Right cardiac atrium (tissue), 5 donors: ENCODE measurements at regions of chr4 and their contacts with region 1.

Region 1: GRCh38 chr4:74376888-74377483 is 12.0 kb downstream of the EREG start:
- DNase-seq: no peak
- ATAC-seq: peak; percentile 63 to 64
- H3K4me3 ChIP-seq: no peak overlapping the region
- H3K27ac ChIP-seq: no peak overlapping the region
- H3K4me1 ChIP-seq: no peaks in the 10 kb centered on the region
- H3K27me3 ChIP-seq: no peaks in the 10 kb centered on the region

Region 2: GRCh38 chr4:74444891-74445642 is 68.1 kb after region 1 on chr4 and contains the start of gene AREG:
- intact Hi-C with region 1: loop called in 1 of 4 experiments (anchors 5 kb)
- DNase-seq: peak; percentile 77 to 92 (median 86)
- ATAC-seq: peak; percentile 94 to 96
- H3K4me3 ChIP-seq: peak within 1 kb of the TSS; percentile 46
- H3K27ac ChIP-seq: peak within 1 kb of the TSS; percentile 61
- H3K4me1 ChIP-seq: no peaks in the 10 kb centered on the region
- H3K27me3 ChIP-seq: no peaks in the 10 kb centered on the region
- total RNA-seq, gene AREG: 2.7 to 7.3 (median 3.7) TPM

Region 3: GRCh38 chr4:74531963-74532794 is 155.2 kb after region 1 on chr4:
- intact Hi-C with region 1: loop called (anchors 5 to 10 kb)
- DNase-seq: no peak
- ATAC-seq: peak; percentile 69 to 73
- H3K4me3 ChIP-seq: no peak overlapping the region
- H3K27ac ChIP-seq: no peak overlapping the region
- H3K4me1 ChIP-seq: no peaks in the 10 kb centered on the region
- H3K27me3 ChIP-seq: no peaks in the 10 kb centered on the region

Region 4: DNA sequence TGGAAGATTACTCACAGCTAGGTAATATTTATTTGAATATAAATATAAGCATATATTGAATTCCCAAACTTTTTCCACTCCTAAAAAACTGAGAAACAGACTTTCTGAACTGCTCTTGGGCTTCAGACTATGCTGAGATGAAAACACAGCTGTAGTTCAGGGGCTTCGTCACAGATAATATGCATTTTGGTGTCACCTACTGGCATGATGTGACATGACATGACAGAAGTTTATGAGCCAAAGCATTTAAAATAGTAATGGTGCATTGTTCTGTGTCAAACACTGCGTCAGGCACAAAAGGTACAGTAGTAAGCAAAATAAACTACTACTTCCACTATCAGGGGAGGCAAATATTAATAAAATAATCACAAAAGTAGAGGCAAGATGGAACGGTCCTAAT is 246.1 kb after region 1 on chr4:
- intact Hi-C with region 1: loop called in 2 of 4 experiments (anchors 5 to 10 kb)
- DNase-seq: no peak
- ATAC-seq: peak; percentile 49 to 56
- H3K4me3 ChIP-seq: no peak overlapping the region
- H3K27ac ChIP-seq: no peak overlapping the region
- H3K4me1 ChIP-seq: peaks cover 2% of the 10 kb centered on the region
- H3K27me3 ChIP-seq: no peaks in the 10 kb centered on the region